Caki2 (cell line): ENCODE measurements at regions of chr11 and their contacts with region 1.

Region 1: GRCh38 chr11:44110231-44110679 is 14.8 kb downstream of the EXT2 start:
- DNase-seq: peak; percentile 24

Region 2: DNA sequence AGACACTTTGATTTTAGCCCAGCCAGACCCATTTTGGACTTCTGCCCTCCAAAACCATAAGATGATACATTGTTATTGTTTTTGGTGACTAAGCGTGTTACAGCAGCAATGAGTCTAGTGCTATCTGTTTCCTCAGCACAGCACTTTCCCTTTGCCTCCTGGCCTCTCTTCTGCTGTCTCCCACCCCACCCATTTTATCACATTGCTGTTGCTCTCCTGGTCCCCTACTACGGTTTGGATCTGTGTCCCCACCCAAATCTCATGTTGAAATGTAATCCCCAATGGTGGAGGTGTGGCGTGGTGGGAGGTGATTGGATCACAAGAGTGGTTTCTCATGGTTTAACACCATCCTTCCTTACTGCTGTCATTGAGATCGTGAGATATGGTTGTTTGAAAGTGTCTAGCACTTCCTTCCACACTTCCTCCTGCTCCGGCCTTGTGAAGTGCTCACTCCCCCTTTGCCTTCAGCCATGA is 395.4 kb after region 1 on chr11:
- in situ Hi-C with region 1: loop called (anchors 25 kb)
- DNase-seq: peak; percentile 61